Left cardiac atrium (tissue), 4 donors: ENCODE measurements at regions of chr4 and their contacts with region 1.

Region 1: GRCh38 chr4:183987987-183988392 is 82.9 kb downstream of the STOX2 start:
- DNase-seq: peak; percentile 76
- ATAC-seq: peak; percentile 93 to 94

Region 2: GRCh38 chr4:183602557-183603027 is 385.4 kb before region 1 on chr4:
- intact Hi-C with region 1: no loop called
- DNase-seq: no peak
- ATAC-seq: no peak

Region 3: GRCh38 chr4:183876268-183876934 is 111.6 kb before region 1 on chr4:
- intact Hi-C with region 1: loop called in 1 of 2 experiments (anchors 10 kb)
- DNase-seq: peak; percentile 89
- ATAC-seq: peak; percentile 93 to 97

Region 4: DNA sequence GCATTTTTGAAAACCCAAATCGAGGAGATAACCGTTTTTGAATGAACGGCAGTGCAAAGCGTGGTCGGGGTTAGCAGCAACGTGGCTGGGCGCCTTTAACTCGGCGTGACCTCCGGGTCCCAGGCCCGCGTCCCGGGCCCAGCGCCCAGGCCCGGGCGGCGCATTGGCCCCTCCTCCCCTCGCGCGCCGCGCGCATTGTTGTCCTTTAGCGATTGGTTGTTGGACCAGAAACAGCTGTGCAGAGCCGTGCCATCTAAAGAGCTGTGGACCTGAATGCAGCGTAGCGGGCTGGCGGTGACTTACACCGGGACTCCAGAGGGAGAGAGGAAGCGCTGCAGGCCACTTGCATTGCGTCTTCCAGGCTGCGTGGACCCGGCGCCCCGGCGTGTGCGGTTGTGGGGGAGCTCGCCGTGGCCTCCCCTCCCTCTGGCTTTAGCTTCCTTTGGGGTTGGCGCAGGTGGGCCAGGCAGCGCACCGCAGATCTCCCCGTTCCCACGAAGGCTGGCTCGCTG is 82.9 kb before region 1 on chr4 and contains the start of gene STOX2:
- intact Hi-C with region 1: loop called in 1 of 2 experiments (anchors 2 kb)
- DNase-seq: peak; percentile 85
- ATAC-seq: peak; percentile 88 to 95
- total RNA-seq, gene STOX2: 9.1 to 11.2 TPM